Mammary epithelial cell (primary cell): ENCODE measurements at regions of chr7 and their contacts with region 1.

Region 1: GRCh38 chr7:77940647-77941046 is 142.1 kb downstream of the PHTF2 start:
- DNase-seq: peak; percentile 7
- H3K4me3 ChIP-seq: no peak overlapping the region
- H3K27ac ChIP-seq: no peak overlapping the region
- H3K4me1 ChIP-seq: peaks cover 3% of the 10 kb centered on the region
- H3K27me3 ChIP-seq: no peaks in the 10 kb centered on the region
- CTCF ChIP-seq: peak; percentile 41 to 67

Region 2: DNA sequence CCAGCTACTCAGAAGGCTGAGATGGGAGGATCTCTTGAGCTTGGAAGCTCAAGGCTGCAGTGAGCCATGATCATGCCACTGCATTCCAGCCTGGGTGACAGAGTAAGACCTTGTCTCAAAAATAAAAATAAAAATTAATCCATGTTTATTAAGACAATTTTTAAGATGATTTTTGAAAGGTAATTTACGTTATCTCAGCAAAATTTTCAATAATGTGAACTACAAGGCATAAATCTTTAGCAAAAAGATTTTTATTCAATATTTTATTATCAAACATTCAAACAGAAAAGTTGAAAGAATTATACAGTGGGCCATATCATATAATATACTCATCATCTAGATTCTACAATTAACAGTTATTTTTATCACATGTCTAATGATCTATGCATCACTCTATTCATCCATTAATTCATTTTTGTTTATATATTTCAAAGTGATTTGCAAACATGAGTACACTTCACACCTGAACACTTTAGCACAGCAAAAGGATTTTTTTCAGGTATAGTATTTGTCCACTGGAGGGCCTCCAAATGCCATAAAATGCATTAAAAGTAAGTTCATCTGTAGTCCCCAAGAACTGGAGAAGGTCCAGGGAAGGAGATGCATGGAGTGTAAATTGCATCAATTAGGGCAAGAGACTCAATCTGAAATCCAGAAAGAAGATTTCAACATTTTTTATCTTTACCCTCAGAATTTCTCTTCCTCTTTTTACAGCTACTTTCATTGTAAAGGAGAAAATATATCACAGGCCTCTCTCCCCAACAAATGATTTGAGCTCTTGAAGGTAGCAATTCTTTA is 283.0 kb before region 1 on chr7:
- CTCF ChIA-PET with region 1: no interaction called
- dilution Hi-C with region 1: no loop called
- in situ Hi-C with region 1: no loop called
- intact Hi-C with region 1: loop called (anchors 1 kb)
- DNase-seq: peak; percentile 24
- H3K4me3 ChIP-seq: no peak overlapping the region
- H3K27ac ChIP-seq: no peak overlapping the region
- H3K4me1 ChIP-seq: no peaks in the 10 kb centered on the region
- H3K27me3 ChIP-seq: no peaks in the 10 kb centered on the region
- CTCF ChIP-seq: peak; percentile 38 to 57

Region 3: DNA sequence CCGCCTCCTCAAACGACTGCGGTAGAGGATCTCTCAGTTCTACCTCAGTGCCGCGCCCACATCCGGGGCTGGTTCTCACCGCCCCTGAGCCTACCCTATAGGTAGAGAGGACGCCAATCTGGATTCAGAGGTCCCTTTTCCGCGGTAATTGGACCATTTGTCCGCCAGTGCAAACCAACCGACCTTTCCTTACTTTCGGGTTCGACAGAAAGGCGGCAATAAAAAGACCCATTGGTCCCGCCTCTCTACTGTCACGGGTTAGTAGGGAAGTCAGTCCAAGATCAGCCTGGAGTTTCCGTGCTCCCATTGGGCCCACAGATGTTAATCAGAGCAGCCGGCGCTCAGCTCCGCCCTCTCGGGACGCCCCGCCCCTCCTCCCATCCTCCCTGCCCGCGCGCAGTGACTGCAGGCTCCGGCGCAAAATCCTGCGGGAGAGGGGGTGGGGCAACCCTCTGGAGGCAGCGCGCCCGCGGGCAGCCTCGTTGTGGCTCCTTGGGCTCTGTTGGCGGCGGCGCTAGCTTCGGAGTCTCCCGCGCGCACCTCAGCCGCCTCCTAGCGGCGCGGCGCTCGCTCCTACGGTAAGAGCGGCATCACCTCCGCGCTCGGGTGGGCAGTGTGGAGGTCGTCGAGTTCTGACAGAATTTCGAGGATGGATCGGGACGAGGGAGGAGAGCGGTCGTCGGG is 142.1 kb before region 1 on chr7 and contains the starts of genes PHTF2 and TMEM60:
- CTCF ChIA-PET with region 1: no interaction called
- dilution Hi-C with region 1: no loop called
- in situ Hi-C with region 1: no loop called
- intact Hi-C with region 1: loop called (anchors 2 kb)
- DNase-seq: peak; percentile 100
- H3K4me3 ChIP-seq: peak within 1 kb of the TSS; percentile 96 to 97 (median 96)
- H3K27ac ChIP-seq: peak within 1 kb of the TSS; percentile 83
- H3K4me1 ChIP-seq: peaks cover 17% of the 10 kb centered on the region
- H3K27me3 ChIP-seq: no peaks in the 10 kb centered on the region
- CTCF ChIP-seq: peak; percentile 43 to 71
- total RNA-seq, gene PHTF2: 19.8 to 26.4 TPM
- total RNA-seq, gene TMEM60: 9.5 to 12.8 TPM

Region 4: GRCh38 chr7:77989981-77990566 is 49.4 kb after region 1 on chr7:
- CTCF ChIA-PET with region 1: no interaction called
- dilution Hi-C with region 1: no loop called
- in situ Hi-C with region 1: no loop called
- intact Hi-C with region 1: no loop called
- DNase-seq: peak; percentile 1
- H3K4me3 ChIP-seq: no peak overlapping the region
- H3K27ac ChIP-seq: no peak overlapping the region
- H3K4me1 ChIP-seq: no peaks in the 10 kb centered on the region
- H3K27me3 ChIP-seq: peaks cover 2% of the 10 kb centered on the region
- CTCF ChIP-seq: no peak

Region 5: DNA sequence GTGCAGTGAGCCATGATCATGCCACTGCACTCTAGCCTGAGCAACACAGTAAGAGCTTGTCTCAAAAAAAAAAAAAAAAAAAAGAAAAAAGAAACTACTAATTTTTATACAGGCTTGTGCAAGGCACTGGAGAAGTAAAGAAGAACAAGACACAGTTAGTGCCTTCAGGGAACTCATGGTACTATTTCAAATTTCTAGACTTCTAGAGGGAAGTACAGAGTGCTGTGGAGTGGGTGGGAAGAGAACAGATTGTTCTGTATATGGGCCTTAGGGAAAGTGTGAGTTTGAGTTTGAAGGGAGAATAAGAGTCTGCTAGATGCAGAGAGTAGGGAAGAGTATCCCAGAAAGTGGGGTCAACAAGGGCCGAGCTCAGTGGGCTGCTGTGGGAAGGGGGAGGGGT is 92.8 kb after region 1 on chr7:
- CTCF ChIA-PET with region 1: no interaction called
- dilution Hi-C with region 1: loop called (anchors 5 kb)
- in situ Hi-C with region 1: no loop called
- intact Hi-C with region 1: no loop called
- DNase-seq: no peak
- H3K4me3 ChIP-seq: no peak overlapping the region
- H3K27ac ChIP-seq: no peak overlapping the region
- H3K4me1 ChIP-seq: no peaks in the 10 kb centered on the region
- H3K27me3 ChIP-seq: no peaks in the 10 kb centered on the region
- CTCF ChIP-seq: no peak

Region 6: GRCh38 chr7:78226059-78226719 is 285.5 kb after region 1 on chr7:
- CTCF ChIA-PET with region 1: no interaction called
- dilution Hi-C with region 1: no loop called
- in situ Hi-C with region 1: no loop called
- intact Hi-C with region 1: loop called (anchors 5 kb)
- DNase-seq: peak; percentile 1
- H3K4me3 ChIP-seq: no peak overlapping the region
- H3K27ac ChIP-seq: no peak overlapping the region
- H3K4me1 ChIP-seq: no peaks in the 10 kb centered on the region
- H3K27me3 ChIP-seq: no peaks in the 10 kb centered on the region
- CTCF ChIP-seq: peak; percentile 30 to 57